ENCODE measurements at regions of chr10 and their contacts with region 1.

Region 1: DNA sequence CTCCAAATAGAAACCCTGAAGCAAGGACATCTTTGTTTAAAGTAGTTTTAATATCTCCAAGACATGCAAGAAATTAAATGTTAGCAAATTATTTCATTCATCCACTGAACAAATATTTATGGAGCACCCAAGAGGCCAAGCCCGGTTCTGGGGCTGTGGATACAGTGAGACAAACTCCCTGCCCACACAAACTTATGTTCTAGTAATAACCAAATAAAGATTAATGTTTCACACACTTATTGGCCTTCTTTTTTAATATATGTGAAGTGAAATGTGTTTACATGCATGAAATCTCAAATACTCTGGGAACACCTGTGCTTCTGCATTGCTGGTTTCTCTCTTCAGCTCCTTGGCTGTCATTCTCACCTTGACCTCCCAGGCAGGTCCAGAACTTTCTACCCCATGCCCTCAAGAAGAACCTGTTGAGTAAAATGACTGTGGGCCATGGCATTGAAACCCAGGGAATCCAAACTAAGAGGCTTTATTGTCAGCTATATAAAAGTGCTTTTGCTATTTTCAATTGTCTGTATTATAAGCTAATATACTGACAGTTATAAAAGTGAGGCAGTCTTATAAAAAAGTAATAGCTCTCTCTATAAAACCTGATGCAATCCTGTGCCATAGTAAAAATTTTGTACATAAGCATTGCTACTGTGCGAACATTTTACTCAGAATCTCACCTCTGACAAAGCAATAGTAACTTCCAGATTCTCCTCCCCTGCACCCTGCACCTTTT is 43.7 kb downstream of the SVIL start:
- DNase-seq: no peak
- ATAC-seq: no peak
- H3K4me3 ChIP-seq: no peak overlapping the region
- H3K4me3 Mint-ChIP-seq: peak overlapping the region in 3 of 10 donors; percentile 2 to 55 (median 41)
- H3K27ac ChIP-seq: no peak overlapping the region
- H3K27ac Mint-ChIP-seq: peak overlapping the region in 3 of 9 donors; percentile 6 to 24 (median 10)
- H3K4me1 ChIP-seq: peaks cover 0 to 7% of the 10 kb centered on the region in 2 donors
- H3K4me1 Mint-ChIP-seq: peaks cover 8 to 21% (median 11%) of the 10 kb centered on the region in 7 donors
- H3K27me3 ChIP-seq: no peaks in the 10 kb centered on the region
- H3K27me3 Mint-ChIP-seq: no peaks in the 10 kb centered on the region

Region 2: DNA sequence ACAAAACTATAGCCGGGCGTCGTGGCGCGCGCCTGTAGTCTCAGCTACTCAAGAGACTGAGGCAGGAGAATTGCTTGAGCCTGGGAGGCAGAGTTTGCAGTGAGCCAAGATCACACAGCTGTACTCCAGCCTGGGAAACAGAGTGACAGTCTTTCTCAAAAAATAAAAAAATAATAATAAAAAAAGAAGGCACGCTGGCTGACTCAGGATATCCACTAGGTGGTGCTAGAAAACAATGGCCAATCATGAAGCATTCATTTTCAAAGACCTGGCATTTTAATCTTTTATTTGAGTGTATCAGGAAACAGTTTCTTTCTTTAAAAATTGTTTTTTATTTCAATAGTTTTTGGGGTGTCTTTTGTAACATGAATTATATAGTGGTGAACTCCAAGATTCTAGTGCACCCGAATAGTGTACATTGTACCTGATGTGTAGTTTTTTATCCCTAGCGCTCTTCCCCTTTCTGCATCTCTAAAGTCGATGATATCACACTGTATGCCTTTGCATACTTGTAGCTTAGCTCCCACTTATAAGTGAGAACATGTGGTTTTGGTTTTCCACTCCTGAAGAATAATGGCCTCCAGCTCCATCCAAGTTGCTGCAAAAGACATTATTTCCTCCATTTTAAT is 213.6 kb before region 1 on chr10:
- CTCF ChIA-PET with region 1: no interaction called
- POLR2A ChIA-PET with region 1: no interaction called
- intact Hi-C with region 1: loop called in 1 of 2 experiments (anchors 5 kb)
- DNase-seq: peak in 4 of 9 donors; percentile 6 to 25 (median 14)
- ATAC-seq: no peak
- H3K4me3 ChIP-seq: no peak overlapping the region
- H3K4me3 Mint-ChIP-seq: no peak overlapping the region
- H3K27ac ChIP-seq: no peak overlapping the region
- H3K27ac Mint-ChIP-seq: no peak overlapping the region
- H3K4me1 ChIP-seq: no peaks in the 10 kb centered on the region
- H3K4me1 Mint-ChIP-seq: peaks cover 2 to 12% (median 8%) of the 10 kb centered on the region in 7 donors
- H3K27me3 ChIP-seq: peaks cover 0 to 3% of the 10 kb centered on the region in 2 donors
- H3K27me3 Mint-ChIP-seq: peaks cover 0 to 9% (median 3%) of the 10 kb centered on the region in 5 donors

Region 3: GRCh38 chr10:29386342-29386999 is 204.6 kb before region 1 on chr10:
- CTCF ChIA-PET with region 1: no interaction called
- POLR2A ChIA-PET with region 1: no interaction called
- intact Hi-C with region 1: loop called in 1 of 2 experiments (anchors 2 kb)
- DNase-seq: peak in 6 of 9 donors; percentile 5 to 40 (median 35)
- ATAC-seq: peak; percentile 67
- H3K4me3 ChIP-seq: no peak overlapping the region
- H3K4me3 Mint-ChIP-seq: no peak overlapping the region
- H3K27ac ChIP-seq: no peak overlapping the region
- H3K27ac Mint-ChIP-seq: no peak overlapping the region
- H3K4me1 ChIP-seq: no peaks in the 10 kb centered on the region
- H3K4me1 Mint-ChIP-seq: peaks cover 0 to 6% (median 0%) of the 10 kb centered on the region in 7 donors
- H3K27me3 ChIP-seq: peaks cover 0 to 3% of the 10 kb centered on the region in 2 donors
- H3K27me3 Mint-ChIP-seq: peaks cover 0 to 13% (median 5%) of the 10 kb centered on the region in 5 donors

Region 4: DNA sequence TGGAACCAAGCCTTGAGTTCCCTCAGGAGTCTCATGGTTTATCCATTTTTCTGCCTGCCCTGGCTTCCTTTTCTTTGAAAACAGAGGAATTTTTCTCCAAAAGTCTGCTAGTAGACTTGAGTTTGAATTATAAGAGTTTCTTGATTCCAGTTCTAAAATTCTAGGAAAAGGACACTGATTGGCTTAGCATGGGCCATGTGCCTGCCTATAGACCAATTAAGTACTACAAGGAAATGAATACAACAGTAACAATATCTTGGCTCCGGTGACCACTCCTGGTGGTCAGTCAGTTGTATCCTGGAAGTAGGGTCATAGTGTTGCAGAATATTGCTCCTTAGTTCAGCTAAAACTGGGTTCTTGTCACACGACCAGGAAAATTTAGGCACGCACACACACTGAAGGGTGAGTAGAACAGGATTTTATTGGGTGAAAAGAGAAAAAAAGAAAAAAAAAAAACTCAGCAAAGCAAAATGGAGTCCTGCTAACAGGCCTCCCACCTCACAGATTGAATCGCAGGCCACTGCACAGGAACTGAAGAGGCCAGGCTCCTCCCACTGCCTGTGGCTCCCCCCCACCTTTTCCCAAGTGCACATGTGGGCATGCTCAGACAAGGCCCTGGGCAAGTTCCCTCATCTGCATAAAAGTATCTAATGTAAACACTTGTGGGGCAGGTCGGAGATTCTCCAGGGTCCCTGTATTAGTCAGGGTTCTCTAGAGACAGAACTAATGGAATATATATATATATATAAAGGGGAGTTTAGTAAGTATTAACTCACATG is 147.1 kb before region 1 on chr10:
- CTCF ChIA-PET with region 1: no interaction called
- POLR2A ChIA-PET with region 1: no interaction called
- intact Hi-C with region 1: loop called (anchors 1 to 5 kb)
- DNase-seq: no peak
- ATAC-seq: no peak
- H3K4me3 ChIP-seq: no peak overlapping the region
- H3K4me3 Mint-ChIP-seq: no peak overlapping the region
- H3K27ac ChIP-seq: no peak overlapping the region
- H3K27ac Mint-ChIP-seq: no peak overlapping the region
- H3K4me1 ChIP-seq: no peaks in the 10 kb centered on the region
- H3K4me1 Mint-ChIP-seq: peaks cover 0 to 14% (median 4%) of the 10 kb centered on the region in 7 donors
- H3K27me3 ChIP-seq: no peaks in the 10 kb centered on the region
- H3K27me3 Mint-ChIP-seq: no peaks in the 10 kb centered on the region

Region 5: GRCh38 chr10:29517352-29517923 is 73.6 kb before region 1 on chr10:
- CTCF ChIA-PET with region 1: interaction called, 4 read pairs
- POLR2A ChIA-PET with region 1: no interaction called
- intact Hi-C with region 1: loop called (anchors 1 kb)
- DNase-seq: no peak
- ATAC-seq: no peak
- H3K4me3 ChIP-seq: no peak overlapping the region
- H3K4me3 Mint-ChIP-seq: no peak overlapping the region
- H3K27ac ChIP-seq: no peak overlapping the region
- H3K27ac Mint-ChIP-seq: peak overlapping the region in 1 of 9 donors; percentile 17
- H3K4me1 ChIP-seq: no peaks in the 10 kb centered on the region
- H3K4me1 Mint-ChIP-seq: peaks cover 0 to 2% (median 0%) of the 10 kb centered on the region in 7 donors
- H3K27me3 ChIP-seq: no peaks in the 10 kb centered on the region
- H3K27me3 Mint-ChIP-seq: no peaks in the 10 kb centered on the region

Region 6: DNA sequence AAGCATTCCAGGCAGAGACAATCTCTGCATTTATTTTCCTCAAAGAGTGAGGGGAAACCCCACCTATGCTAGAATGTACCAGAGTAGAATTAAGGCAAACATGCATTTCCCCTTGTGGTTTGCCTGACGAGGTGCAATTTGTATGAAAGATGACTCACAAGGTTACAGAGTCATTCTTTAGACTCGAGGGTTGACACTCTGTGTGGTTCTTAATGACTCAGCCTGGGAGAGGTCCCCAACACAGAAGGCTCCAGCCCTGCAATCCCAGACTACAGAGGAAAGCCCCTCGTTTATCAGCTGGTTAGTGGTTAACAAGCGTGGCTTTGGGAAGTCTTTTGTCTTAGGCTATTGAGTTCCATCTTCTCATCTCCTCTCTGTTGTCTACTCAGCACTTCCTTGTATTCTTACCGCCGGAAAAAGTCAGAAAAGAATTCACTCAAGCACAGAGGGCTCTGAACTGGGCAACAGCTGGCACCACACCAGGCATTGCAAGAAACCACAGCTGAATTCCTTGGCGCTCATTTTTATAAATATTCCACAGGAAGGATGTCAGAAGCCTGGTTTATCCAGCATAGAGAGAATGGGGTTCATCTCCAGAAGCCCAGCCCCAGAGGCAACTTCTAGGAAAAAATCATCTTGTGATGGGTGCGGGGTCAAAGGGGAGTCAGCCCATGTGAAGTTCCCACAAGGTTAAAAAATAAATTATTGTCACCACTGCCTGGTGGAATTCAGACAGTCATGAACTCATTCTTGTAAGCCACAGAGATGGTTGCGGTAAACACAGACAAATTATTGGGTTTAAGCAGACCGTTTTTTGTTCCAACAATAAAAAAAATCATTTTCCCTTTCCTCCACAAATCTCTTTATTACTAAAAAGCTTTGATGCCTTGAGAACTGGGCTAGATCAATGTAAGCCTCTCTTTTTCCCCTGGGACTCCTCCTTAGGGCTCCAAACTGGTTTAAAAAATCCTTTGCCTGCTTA is 68.2 kb after region 1 on chr10:
- CTCF ChIA-PET with region 1: no interaction called
- POLR2A ChIA-PET with region 1: no interaction called
- intact Hi-C with region 1: loop called in 1 of 2 experiments (anchors 1 kb)
- DNase-seq: peak in 8 of 9 donors; percentile 34 to 82 (median 48)
- ATAC-seq: peak; percentile 97
- H3K4me3 ChIP-seq: peak overlapping the region; percentile 12
- H3K4me3 Mint-ChIP-seq: peak overlapping the region; percentile 39 to 81 (median 64)
- H3K27ac ChIP-seq: peak overlapping the region; percentile 2
- H3K27ac Mint-ChIP-seq: peak overlapping the region; percentile 3 to 84 (median 58)
- H3K4me1 ChIP-seq: peaks cover 14 to 30% of the 10 kb centered on the region in 2 donors
- H3K4me1 Mint-ChIP-seq: peaks cover 21 to 51% (median 29%) of the 10 kb centered on the region in 7 donors
- H3K27me3 ChIP-seq: no peaks in the 10 kb centered on the region
- H3K27me3 Mint-ChIP-seq: peaks cover 0 to 49% (median 0%) of the 10 kb centered on the region in 5 donors

Region 7: DNA sequence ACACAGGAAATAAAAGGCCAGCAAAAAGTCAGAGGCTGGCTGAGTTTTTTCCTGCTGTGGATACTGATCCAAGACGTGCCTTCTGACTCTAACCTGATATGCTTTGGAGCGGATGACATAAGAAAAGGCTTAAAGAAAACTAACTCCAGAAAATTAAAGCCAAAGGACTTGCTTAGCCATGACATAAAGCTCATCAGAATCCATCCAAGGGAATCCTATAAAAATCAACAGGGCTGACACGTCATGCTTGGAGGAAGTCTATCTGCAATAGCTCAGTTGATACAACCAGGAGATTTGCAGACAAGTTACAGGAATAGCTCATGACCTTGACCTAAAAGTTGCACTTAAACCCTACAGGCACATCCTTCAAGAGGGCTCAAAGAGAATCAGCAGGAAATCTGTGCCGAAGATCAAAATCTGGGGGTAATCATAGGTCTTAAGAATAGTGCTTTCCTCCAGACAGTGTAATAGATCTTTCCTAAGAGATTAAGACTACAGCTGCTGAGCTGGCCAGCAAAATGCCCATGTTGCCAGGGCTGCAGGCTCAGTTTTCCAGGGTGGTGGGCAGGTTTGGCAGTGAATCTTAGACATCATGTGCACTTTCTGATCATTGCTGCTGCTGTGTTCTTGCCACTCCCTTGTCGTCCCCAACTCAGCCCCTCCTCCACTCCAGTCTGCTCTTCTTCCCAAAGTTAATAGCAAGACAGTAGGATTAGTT is 155.2 kb after region 1 on chr10:
- CTCF ChIA-PET with region 1: no interaction called
- POLR2A ChIA-PET with region 1: no interaction called
- intact Hi-C with region 1: no loop called
- DNase-seq: no peak
- ATAC-seq: no peak
- H3K4me3 ChIP-seq: no peak overlapping the region
- H3K4me3 Mint-ChIP-seq: no peak overlapping the region
- H3K27ac ChIP-seq: no peak overlapping the region
- H3K27ac Mint-ChIP-seq: no peak overlapping the region
- H3K4me1 ChIP-seq: no peaks in the 10 kb centered on the region
- H3K4me1 Mint-ChIP-seq: peaks cover 0 to 9% (median 0%) of the 10 kb centered on the region in 7 donors
- H3K27me3 ChIP-seq: no peaks in the 10 kb centered on the region
- H3K27me3 Mint-ChIP-seq: peaks cover 0 to 19% (median 4%) of the 10 kb centered on the region in 5 donors

Measured in naive thymus-derived CD4-positive, alpha-beta T cell (primary cell).